ENCODE measurements at regions of chr4 and their contacts with region 1.

Region 1: GRCh38 chr4:145234091-145234706 is 53.8 kb upstream of the OTUD4 start:
- DNase-seq: peak in 6 of 7 donors; percentile 16 to 54 (median 30)
- H3K4me3 ChIP-seq: no peak overlapping the region
- H3K27ac ChIP-seq: no peak overlapping the region
- H3K4me1 ChIP-seq: peaks cover 0 to 7% of the 10 kb centered on the region in 2 donors
- H3K27me3 ChIP-seq: no peaks in the 10 kb centered on the region
- CTCF ChIP-seq: peak; percentile 19 to 65 (median 57)
- POLR2A ChIP-seq: no peak

Region 2: DNA sequence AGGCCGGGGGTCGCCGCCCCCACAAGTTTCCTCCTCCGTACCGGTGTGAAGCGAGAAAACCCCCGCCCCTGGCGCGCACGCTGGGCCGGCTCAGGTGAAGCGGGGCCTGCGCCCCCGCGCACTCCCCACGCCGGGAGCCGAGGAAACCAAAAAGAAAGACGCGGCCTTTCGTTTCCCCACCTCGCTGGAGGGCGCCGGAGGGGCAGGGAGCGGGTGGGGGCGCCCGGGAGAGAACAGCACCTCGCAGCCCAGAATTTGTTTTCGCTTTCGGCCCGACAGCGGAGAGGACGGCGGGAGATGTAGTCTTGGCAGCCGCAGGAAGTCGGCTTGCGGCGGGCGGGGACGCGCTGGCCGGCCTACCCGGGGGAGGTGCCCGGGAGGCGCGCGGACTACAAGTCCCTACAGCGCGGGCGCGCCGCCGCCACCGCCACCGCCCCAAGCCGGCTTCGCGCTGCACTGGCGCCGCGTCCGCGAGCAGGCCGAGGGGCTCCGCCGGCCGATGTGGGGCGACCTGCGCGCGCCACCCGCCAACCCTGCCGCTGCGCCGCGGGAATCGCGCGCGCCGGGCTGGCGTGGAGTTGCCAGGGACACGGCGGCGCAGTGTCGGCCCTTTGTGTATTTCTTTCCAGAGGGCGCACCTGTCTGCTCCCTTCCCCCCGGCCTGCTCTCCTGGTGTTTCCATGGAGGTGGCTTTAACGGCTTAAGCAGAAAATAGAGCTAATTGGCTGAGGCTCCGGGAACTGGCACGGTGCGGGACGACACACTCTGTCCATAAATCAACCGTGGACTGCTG is 53.7 kb before region 1 on chr4 and contains the start of gene OTUD4:
- intact Hi-C with region 1: no loop called
- DNase-seq: peak; percentile 95 to 97 (median 96)
- H3K4me3 ChIP-seq: peak within 1 kb of the TSS; percentile 76 to 95 (median 94)
- H3K27ac ChIP-seq: peak within 1 kb of the TSS; percentile 95 to 99 (median 97)
- H3K4me1 ChIP-seq: peaks cover 28 to 39% of the 10 kb centered on the region in 2 donors
- H3K27me3 ChIP-seq: no peaks in the 10 kb centered on the region
- CTCF ChIP-seq: peak in 2 of 6 experiments; percentile 4 to 12
- POLR2A ChIP-seq: peak; percentile 10 to 59
- total RNA-seq, gene OTUD4: 14.4 to 35.7 (median 30.0) TPM

Region 3: DNA sequence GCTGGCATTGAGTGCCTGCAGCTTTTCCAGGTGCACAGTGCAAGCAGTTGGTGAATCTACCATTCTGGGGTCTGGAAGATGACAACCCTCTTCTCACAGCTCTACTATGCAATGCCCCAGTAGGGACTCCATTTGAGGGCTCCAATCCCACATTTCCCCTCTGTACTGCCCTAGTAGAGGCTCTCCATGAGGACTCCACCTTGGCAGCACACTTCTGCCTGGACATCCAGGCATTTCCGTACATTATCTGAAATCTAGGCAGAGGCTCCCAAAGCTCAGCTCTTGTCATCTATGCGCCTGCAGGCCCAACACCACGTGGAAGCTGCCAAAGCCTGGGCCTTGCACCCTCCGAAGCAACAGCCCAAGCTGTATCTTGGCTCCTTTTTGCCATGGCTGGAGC is 239.0 kb after region 1 on chr4:
- intact Hi-C with region 1: no loop called
- DNase-seq: no peak
- H3K4me3 ChIP-seq: no peak overlapping the region
- H3K27ac ChIP-seq: no peak overlapping the region
- H3K4me1 ChIP-seq: no peaks in the 10 kb centered on the region
- H3K27me3 ChIP-seq: no peaks in the 10 kb centered on the region
- CTCF ChIP-seq: no peak
- POLR2A ChIP-seq: no peak

Region 4: GRCh38 chr4:145557720-145558119 is 323.5 kb after region 1 on chr4:
- intact Hi-C with region 1: loop called in 1 of 2 experiments (anchors 10 kb)
- DNase-seq: peak; percentile 42 to 79 (median 56)
- H3K4me3 ChIP-seq: no peak overlapping the region
- H3K27ac ChIP-seq: no peak overlapping the region
- H3K4me1 ChIP-seq: no peaks in the 10 kb centered on the region
- H3K27me3 ChIP-seq: no peaks in the 10 kb centered on the region
- CTCF ChIP-seq: peak; percentile 68 to 88 (median 86)
- POLR2A ChIP-seq: no peak

Region 5: DNA sequence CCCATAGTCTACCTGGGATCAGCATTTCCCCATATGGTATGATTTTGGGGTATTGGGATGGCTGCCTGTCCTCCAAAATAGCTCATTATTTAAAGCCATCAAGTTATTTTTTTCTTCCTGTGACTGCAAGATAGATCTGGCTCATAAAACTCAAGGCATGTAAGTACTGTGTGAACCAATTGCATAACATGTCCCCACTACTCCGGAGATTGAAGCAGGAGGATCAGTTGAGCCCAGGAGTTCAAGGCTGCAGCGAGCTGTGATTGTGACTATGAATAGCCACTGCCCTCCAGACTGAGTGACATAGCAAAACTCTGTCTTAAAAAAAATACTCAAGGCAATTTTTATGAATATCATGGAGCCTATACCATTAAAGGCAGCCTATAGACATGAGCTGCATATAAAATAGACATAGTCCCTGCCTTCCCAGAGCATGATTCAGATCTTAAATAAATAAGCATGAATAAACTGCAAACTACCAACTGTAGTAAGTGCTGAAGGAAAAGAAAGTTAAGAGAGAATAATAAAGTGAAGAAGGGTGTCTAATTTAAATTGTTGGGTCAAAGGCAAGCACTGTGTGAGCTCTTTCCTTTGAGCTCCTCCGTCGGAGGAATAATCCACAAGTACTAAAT is 368.0 kb after region 1 on chr4:
- intact Hi-C with region 1: loop called in 1 of 2 experiments (anchors 5 kb)
- DNase-seq: peak in 6 of 7 donors; percentile 12 to 62 (median 44)
- H3K4me3 ChIP-seq: no peak overlapping the region
- H3K27ac ChIP-seq: no peak overlapping the region
- H3K4me1 ChIP-seq: peaks cover 0 to 8% of the 10 kb centered on the region in 2 donors
- H3K27me3 ChIP-seq: no peaks in the 10 kb centered on the region
- CTCF ChIP-seq: no peak
- POLR2A ChIP-seq: no peak

Region 6: DNA sequence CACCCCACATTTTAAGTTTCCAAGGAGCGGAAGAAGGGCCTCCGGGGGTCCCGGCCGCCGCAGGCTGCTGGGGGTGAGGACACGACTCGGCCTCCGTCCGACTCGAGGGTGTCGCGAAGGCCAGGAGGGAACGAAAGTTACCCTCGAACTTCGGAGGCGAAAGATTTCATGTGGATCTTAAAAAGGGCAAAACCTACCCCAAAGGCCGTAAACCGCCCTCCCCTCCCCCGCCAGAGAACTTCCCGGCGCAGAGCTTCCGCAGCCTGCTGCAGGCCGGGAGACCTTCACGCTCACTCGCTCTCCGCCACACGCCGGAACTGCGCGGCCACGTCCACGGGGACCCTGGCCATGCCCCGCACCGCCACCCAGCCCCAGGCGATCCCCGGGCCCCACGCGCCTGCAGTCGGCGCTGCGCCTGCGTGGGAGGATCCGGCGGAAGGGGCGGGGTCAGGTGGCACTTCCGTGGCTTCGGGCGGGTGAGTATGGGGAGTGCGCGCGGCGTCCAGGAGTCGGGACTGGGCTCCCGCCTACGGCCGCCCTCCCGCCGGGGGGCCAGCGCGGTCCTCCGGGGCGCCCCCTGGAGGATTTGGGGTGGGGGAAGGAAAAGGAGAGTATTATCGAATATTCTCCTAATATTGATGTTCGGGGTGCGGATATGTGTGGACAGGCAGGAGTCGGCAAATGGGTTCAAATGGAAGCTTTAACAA is 384.9 kb after region 1 on chr4 and contains the start of gene MMAA:
- intact Hi-C with region 1: loop called in 1 of 2 experiments (anchors 10 kb)
- DNase-seq: peak; percentile 95 to 96 (median 96)
- H3K4me3 ChIP-seq: peak within 1 kb of the TSS; percentile 46 to 88 (median 68)
- H3K27ac ChIP-seq: peak within 1 kb of the TSS; percentile 28 to 98 (median 97)
- H3K4me1 ChIP-seq: peaks cover 4 to 16% of the 10 kb centered on the region in 2 donors
- H3K27me3 ChIP-seq: no peaks in the 10 kb centered on the region
- CTCF ChIP-seq: peak; percentile 41 to 63 (median 54)
- POLR2A ChIP-seq: peak; percentile 85 to 96
- total RNA-seq, gene MMAA: 4.8 to 19.3 (median 12.0) TPM

Region 7: DNA sequence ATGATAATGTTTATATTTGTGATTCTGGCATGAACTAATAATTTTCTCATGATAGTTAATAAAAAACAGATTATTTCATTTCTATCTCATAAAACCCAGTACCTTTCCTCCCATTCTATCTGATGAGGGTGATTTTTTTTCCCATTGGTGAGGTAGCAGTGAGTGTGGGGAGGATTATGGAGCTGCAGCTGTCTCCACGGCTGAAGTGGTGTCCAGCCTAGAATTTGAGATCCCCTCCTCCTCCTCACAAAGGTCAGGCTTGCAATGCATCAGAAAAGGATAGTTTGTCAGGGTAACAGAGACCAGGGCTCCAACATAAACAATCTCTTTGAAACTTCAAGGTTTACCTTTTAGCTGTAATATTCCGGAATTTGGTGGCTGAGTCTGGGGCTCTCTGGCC is 506.6 kb after region 1 on chr4:
- intact Hi-C with region 1: no loop called
- DNase-seq: no peak
- H3K4me3 ChIP-seq: no peak overlapping the region
- H3K27ac ChIP-seq: no peak overlapping the region
- H3K4me1 ChIP-seq: peaks cover 6 to 9% of the 10 kb centered on the region in 2 donors
- H3K27me3 ChIP-seq: no peaks in the 10 kb centered on the region
- CTCF ChIP-seq: no peak
- POLR2A ChIP-seq: no peak

Measured in adrenal gland (tissue), 19 donors.